Activated CD8-positive, alpha-beta T cell treated with anti-CD3 and anti-CD28 coated beads, Interleukin-2, amount 10 ng/mL, durations not matched to agents 7 days and 5 days (primary cell): ENCODE measurements at regions of chr2 and their contacts with region 1.

Region 1: GRCh38 chr2:48420512-48421197 is 109.3 kb upstream of the STON1 start:
- DNase-seq: peak; percentile 96
- ATAC-seq: peak; percentile 92
- H3K4me3 Mint-ChIP-seq: peak overlapping the region; percentile 30
- H3K27ac Mint-ChIP-seq: peak overlapping the region; percentile 76
- H3K4me1 Mint-ChIP-seq: peaks cover 48% of the 10 kb centered on the region
- H3K27me3 Mint-ChIP-seq: no peaks in the 10 kb centered on the region

Region 2: DNA sequence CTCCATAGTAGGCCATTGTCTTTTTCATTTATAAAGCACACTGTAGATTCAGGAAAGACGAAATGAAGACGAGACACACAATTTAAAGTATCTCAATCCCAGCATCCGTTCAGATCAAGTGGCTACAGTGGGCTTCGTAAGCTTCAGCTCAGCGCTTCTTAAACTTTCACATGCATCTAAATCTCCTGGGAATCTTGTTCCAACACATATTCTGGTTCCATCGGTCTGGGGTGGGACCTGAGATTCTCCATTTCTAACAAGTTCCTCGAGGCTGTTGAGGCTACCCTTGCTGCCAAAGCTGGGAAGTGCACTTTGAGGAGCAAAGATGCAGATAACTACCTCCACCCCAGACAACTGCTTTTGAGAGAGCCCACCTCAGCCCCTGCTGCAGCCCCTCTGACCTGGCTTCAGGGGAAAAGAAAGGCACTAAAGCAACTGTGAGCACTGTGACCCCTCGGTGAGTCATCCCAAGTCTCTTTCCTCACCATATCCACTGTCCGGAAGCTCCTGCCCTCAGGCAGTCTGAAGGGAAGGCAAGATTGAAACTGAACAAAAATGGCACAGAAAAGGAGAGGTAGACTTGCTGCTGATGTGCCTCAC is 313.2 kb before region 1 on chr2:
- CTCF ChIA-PET with region 1: interaction called, 14 read pairs
- POLR2A ChIA-PET with region 1: no interaction called
- DNase-seq: no peak
- ATAC-seq: no peak
- H3K4me3 Mint-ChIP-seq: no peak overlapping the region
- H3K27ac Mint-ChIP-seq: no peak overlapping the region
- H3K4me1 Mint-ChIP-seq: peaks cover 22% of the 10 kb centered on the region
- H3K27me3 Mint-ChIP-seq: peaks cover 3% of the 10 kb centered on the region

Region 3: GRCh38 chr2:48112911-48113680 is 307.6 kb before region 1 on chr2:
- CTCF ChIA-PET with region 1: interaction called, 14 read pairs
- POLR2A ChIA-PET with region 1: no interaction called
- DNase-seq: no peak
- ATAC-seq: no peak
- H3K4me3 Mint-ChIP-seq: no peak overlapping the region
- H3K27ac Mint-ChIP-seq: no peak overlapping the region
- H3K4me1 Mint-ChIP-seq: peaks cover 24% of the 10 kb centered on the region
- H3K27me3 Mint-ChIP-seq: no peaks in the 10 kb centered on the region